Sciatic nerve (tissue), 2 donors: ENCODE measurements at regions of chr16 and their contacts with region 1.

Region 1: DNA sequence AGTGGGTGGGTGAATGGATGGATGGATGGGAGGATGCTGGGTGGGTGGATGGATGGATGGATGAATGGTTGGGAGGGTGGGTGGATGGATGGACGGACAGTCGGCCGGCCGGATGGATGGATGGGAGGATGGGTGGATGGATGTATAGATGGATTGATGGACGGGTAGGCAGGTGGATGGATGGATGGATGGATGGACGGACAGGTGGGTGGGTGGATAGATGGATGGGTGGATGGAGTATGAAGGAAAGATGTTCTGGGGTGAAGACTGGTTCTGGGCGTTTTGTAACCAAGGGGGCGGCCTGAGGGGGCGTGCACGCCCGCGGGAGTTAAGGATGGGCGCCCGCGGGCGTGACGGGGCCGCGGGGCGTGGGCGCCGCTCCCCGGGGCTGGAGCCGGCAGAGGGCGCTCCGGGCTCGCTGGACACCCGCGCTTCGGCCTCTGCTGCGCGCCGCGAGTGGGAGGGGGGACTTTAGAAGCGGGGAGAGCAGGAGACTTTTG is at the start of gene NECAB2:
- DNase-seq: peak; percentile 75
- ATAC-seq: peak; percentile 57
- total RNA-seq, gene NECAB2: 0.80 TPM

Region 2: DNA sequence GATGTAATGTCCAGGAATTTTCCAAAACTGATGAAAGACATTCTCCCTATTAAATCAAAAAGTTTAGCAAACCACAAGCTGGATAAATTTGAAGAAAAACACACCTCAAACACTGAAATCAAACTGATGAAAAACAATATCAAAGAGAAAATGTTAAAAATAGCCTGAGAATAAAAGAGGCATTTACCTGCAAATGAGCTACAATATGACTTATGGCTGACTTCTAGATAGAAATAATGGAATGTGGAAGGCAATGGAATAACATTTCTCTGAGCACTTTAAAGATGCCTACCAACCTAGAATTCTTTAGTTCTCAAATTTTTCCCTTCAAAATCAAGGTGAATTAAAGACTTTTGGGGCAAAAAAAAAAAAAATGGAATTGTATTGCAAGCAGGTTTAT is 212.5 kb before region 1 on chr16:
- intact Hi-C with region 1: no loop called
- DNase-seq: no peak
- ATAC-seq: no peak

Region 3: GRCh38 chr16:84054916-84055315 is 87.1 kb after region 1 on chr16:
- intact Hi-C with region 1: loop called (anchors 5 kb)
- DNase-seq: peak; percentile 37
- ATAC-seq: peak; percentile 42

Region 4: DNA sequence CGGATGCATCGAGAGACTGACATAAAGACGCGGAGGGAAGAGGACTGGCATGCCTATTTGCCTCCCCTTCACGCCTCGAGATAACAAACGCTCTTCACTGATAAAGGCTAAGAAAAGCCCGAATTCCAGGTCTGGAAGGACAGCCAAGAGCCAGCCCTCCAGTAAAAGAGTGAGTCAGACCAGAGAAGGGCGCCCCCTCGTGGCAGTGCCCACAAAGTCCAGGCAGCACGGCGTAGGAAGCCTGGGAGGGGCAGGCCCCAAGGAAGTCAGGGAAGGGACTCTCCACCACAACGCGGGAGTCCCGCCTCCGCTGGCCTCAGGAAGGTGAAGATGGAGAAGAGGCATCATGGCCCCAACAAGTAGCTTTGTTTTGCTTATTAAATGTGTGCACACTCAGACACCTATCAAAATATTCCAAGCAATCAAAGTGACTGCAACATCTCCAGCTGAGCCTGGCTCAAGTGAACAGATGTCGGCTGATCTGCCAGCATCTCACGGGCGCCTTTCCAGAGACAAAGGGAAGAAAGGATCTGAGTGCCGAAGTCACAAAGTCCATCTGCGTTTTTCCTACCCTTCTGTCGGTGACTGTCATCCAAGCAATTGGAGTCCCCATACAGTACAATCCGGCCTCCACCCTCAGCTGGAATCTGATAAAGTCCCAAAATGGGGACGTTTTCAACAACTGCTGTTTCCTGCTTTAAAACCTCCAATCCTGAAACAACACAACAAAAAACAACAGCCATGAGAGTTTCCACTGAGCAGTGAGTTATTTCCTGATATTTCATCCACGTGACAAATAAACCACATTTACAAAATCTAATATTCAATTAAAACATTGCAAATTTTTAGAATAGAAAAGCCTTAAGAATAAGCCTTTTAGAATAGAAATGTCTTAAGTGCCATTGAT is 95.1 kb after region 1 on chr16:
- intact Hi-C with region 1: loop called (anchors 5 kb)
- DNase-seq: peak; percentile 84
- ATAC-seq: peak; percentile 93